CD8-positive, alpha-beta T cell (primary cell): ENCODE measurements at regions of chr18 and their contacts with region 1.

Region 1: DNA sequence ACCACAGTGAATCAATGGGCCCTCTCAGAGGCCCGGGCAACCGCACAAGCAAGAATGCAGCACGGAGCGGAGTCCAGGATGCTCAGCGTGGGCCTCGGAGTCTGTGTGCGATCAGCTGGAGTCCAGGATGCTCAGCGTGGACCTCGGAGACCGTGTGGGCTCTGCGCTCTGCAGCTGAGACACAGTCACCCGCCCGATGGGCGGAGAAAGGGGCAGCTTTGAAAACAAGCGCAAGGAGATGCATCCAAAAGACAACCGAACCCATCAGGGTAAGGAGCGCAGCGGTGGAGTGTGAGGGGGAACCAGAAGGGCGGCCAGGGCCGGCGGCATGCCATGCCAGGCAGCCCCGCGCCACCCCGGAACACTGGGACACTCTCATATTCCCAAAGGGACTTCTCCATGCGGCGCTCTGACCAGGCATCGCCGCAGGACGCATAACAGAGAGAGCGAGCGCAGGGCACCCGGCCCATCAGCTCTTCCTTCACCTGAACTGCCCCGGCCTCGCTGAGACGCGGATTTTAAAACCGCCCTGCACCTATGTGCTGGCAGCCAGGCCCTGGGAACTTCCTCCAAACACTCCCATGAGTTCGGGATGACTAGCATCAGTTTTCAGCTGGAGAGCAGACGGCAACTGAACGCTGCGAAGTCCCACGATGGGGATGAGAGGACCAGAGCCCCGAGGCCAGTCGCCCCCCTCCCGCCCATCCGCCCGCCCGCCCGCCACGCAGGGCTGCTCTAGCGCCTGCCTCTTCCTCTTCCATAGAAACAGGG is 44.7 kb downstream of the MC5R start:
- DNase-seq: no peak
- ATAC-seq: no peak
- H3K4me3 ChIP-seq: no peak overlapping the region
- H3K4me3 Mint-ChIP-seq: no peak overlapping the region
- H3K27ac ChIP-seq: no peak overlapping the region
- H3K27ac Mint-ChIP-seq: no peak overlapping the region
- H3K4me1 ChIP-seq: no peaks in the 10 kb centered on the region
- H3K4me1 Mint-ChIP-seq: peaks cover 2% of the 10 kb centered on the region
- H3K27me3 ChIP-seq: peaks cover 0 to 2% of the 10 kb centered on the region in 2 experiments
- H3K27me3 Mint-ChIP-seq: peaks cover 37% of the 10 kb centered on the region
- CTCF ChIP-seq: no peak

Region 2: GRCh38 chr18:13893418-13893760 is 24.7 kb after region 1 on chr18:
- CTCF ChIA-PET with region 1: no interaction called
- POLR2A ChIA-PET with region 1: no interaction called
- intact Hi-C with region 1: no loop called
- DNase-seq: no peak
- ATAC-seq: no peak
- H3K4me3 ChIP-seq: no peak overlapping the region
- H3K4me3 Mint-ChIP-seq: no peak overlapping the region
- H3K27ac ChIP-seq: no peak overlapping the region
- H3K27ac Mint-ChIP-seq: no peak overlapping the region
- H3K4me1 ChIP-seq: no peaks in the 10 kb centered on the region
- H3K4me1 Mint-ChIP-seq: no peaks in the 10 kb centered on the region
- H3K27me3 ChIP-seq: no peaks in the 10 kb centered on the region
- H3K27me3 Mint-ChIP-seq: peaks cover 41% of the 10 kb centered on the region
- CTCF ChIP-seq: no peak

Region 3: DNA sequence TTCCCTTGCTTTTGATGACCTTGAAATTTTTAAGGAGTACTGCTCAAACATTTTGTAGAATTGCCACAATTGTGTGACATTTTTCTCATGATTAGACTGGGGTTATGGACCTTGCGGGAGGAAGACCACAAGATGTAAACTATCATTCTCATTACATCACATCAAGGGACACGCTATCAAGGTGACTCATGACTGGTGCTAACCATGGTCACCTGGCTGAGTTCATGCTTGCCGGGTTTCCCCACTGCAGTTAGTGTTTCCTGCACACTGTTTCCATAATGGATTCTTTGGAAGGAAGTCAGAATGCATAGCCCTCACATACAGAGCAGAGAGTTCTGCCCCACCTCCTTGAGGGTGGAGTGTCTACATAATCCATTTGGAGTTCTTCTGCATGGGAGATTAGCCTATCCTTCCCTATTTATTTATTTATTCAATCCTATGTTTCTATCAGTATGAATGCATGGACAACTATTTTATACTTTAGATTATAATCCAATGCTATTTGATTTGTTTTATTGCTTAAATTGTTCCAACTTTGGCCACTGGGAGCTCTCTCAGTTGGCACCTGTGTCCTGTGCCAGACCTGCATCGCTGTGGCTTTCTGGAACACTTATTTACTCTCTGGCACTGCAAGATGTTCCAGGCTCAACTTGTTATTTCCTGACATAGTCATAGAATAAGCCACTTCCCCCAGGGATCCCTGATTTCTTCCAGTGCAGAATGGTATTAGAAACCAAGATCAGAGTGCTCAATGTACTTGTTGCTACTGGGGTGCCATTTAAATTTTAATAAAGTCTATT is 40.7 kb after region 1 on chr18:
- CTCF ChIA-PET with region 1: no interaction called
- POLR2A ChIA-PET with region 1: no interaction called
- intact Hi-C with region 1: loop called in 1 of 2 experiments (anchors 5 kb)
- DNase-seq: no peak
- ATAC-seq: no peak
- H3K4me3 ChIP-seq: no peak overlapping the region
- H3K4me3 Mint-ChIP-seq: no peak overlapping the region
- H3K27ac ChIP-seq: no peak overlapping the region
- H3K27ac Mint-ChIP-seq: no peak overlapping the region
- H3K4me1 ChIP-seq: no peaks in the 10 kb centered on the region
- H3K4me1 Mint-ChIP-seq: no peaks in the 10 kb centered on the region
- H3K27me3 ChIP-seq: no peaks in the 10 kb centered on the region
- H3K27me3 Mint-ChIP-seq: no peaks in the 10 kb centered on the region
- CTCF ChIP-seq: no peak

Region 4: GRCh38 chr18:13923221-13923620 is 54.5 kb after region 1 on chr18:
- CTCF ChIA-PET with region 1: no interaction called
- POLR2A ChIA-PET with region 1: no interaction called
- intact Hi-C with region 1: loop called in 1 of 2 experiments (anchors 10 kb)
- DNase-seq: no peak
- ATAC-seq: no peak
- H3K4me3 ChIP-seq: no peak overlapping the region
- H3K4me3 Mint-ChIP-seq: no peak overlapping the region
- H3K27ac ChIP-seq: no peak overlapping the region
- H3K27ac Mint-ChIP-seq: no peak overlapping the region
- H3K4me1 ChIP-seq: no peaks in the 10 kb centered on the region
- H3K4me1 Mint-ChIP-seq: no peaks in the 10 kb centered on the region
- H3K27me3 ChIP-seq: no peaks in the 10 kb centered on the region
- H3K27me3 Mint-ChIP-seq: peaks cover 5% of the 10 kb centered on the region
- CTCF ChIP-seq: no peak